MCF 10A (cell line): ENCODE measurements at regions of chr19 and their contacts with region 1.

Region 1: DNA sequence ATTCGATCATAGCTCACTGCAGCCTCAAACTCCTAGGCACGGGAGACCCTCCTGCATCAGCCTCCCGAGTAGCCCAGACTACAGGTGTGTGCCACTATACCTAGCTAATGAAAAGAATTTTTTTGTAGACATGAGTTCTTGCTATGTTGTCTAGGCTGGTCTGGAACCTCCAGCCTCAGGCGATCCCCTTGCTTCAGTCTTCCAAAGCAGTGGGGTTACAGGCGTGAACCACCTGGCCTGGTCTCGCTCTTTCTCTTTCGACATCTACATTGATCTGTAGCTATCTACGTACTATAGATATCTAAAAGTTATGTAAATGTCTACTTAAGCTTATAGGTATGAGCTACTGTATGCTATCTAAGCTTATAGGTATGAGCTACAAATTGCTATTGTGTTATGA is 32.4 kb downstream of the NUMBL start:
- DNase-seq: no peak
- H3K4me3 Mint-ChIP-seq: no peak overlapping the region
- H3K27ac Mint-ChIP-seq: no peak overlapping the region
- H3K4me1 Mint-ChIP-seq: no peaks in the 10 kb centered on the region
- H3K27me3 Mint-ChIP-seq: no peaks in the 10 kb centered on the region
- CTCF ChIP-seq: no peak

Region 2: GRCh38 chr19:40623403-40624251 is 34.4 kb before region 1 on chr19:
- CTCF ChIA-PET with region 1: no interaction called
- POLR2A ChIA-PET with region 1: no interaction called
- intact Hi-C with region 1: no loop called
- DNase-seq: peak; percentile 43
- H3K4me3 Mint-ChIP-seq: no peak overlapping the region
- H3K27ac Mint-ChIP-seq: no peak overlapping the region
- H3K4me1 Mint-ChIP-seq: no peaks in the 10 kb centered on the region
- H3K27me3 Mint-ChIP-seq: no peaks in the 10 kb centered on the region
- CTCF ChIP-seq: no peak

Region 3: DNA sequence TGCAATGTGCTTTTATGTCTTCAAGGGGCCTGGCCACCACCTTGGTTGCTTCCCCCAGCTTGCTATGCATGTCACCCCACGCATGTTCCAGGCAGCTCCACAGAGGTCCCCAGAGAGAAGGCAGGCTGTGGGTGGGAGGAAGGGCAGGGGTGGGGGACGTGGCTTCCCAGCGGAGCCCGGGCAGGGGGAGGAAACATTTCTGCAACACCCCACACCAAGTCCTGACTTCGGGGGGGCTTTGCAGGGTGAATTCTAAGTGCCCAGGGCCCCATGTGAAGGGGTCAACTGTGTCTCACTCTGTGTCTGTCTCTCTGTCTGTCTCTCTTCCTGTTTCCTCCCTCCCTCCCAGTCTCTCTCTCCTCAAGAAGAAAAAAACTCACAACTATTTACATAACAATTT is 17.3 kb before region 1 on chr19:
- CTCF ChIA-PET with region 1: interaction called, 13 read pairs
- POLR2A ChIA-PET with region 1: interaction called, 6 read pairs
- intact Hi-C with region 1: no loop called
- DNase-seq: no peak
- H3K4me3 Mint-ChIP-seq: no peak overlapping the region
- H3K27ac Mint-ChIP-seq: no peak overlapping the region
- H3K4me1 Mint-ChIP-seq: peaks cover 3% of the 10 kb centered on the region
- H3K27me3 Mint-ChIP-seq: no peaks in the 10 kb centered on the region
- CTCF ChIP-seq: no peak